Caco-2 (cell line): ENCODE measurements at regions of chr12 and their contacts with region 1.

Region 1: DNA sequence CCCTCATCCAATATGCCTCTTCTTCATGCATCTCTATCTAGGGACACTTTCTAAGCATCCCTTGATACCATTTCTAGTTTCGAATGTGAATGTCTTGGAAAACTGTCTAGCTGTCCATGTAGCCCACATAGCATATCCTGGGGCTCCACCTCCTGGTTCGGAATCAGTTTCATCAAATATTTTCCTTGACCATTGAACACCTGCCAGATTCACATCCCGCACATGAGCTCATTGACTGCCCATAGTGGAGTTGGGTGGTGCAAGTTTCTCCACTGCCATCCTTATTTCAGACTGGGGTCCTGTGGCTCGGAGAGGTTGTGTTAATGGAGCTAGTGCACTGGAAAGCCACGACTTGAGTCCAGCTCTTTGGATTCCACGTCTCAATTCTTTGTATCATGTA is 58.6 kb upstream of the TMEM263 start:
- DNase-seq: peak in 1 of 2 experiments; percentile 31
- H3K4me3 ChIP-seq: no peak overlapping the region
- H3K4me3 Mint-ChIP-seq: no peak overlapping the region
- H3K27ac Mint-ChIP-seq: no peak overlapping the region
- H3K4me1 ChIP-seq: peaks cover 12% of the 10 kb centered on the region
- H3K4me1 Mint-ChIP-seq: peaks cover 10% of the 10 kb centered on the region
- H3K27me3 ChIP-seq: no peaks in the 10 kb centered on the region
- H3K27me3 Mint-ChIP-seq: no peaks in the 10 kb centered on the region
- CTCF ChIP-seq: peak in 1 of 2 experiments; percentile 37

Region 2: GRCh38 chr12:106386813-106387535 is 510.1 kb before region 1 on chr12:
- CTCF ChIA-PET with region 1: no interaction called
- POLR2A ChIA-PET with region 1: no interaction called
- intact Hi-C with region 1: loop called (anchors 1 kb)
- DNase-seq: no peak
- H3K4me3 ChIP-seq: no peak overlapping the region
- H3K4me3 Mint-ChIP-seq: no peak overlapping the region
- H3K27ac Mint-ChIP-seq: no peak overlapping the region
- H3K4me1 ChIP-seq: no peaks in the 10 kb centered on the region
- H3K4me1 Mint-ChIP-seq: peaks cover 8% of the 10 kb centered on the region
- H3K27me3 ChIP-seq: no peaks in the 10 kb centered on the region
- H3K27me3 Mint-ChIP-seq: no peaks in the 10 kb centered on the region
- CTCF ChIP-seq: no peak

Region 3: DNA sequence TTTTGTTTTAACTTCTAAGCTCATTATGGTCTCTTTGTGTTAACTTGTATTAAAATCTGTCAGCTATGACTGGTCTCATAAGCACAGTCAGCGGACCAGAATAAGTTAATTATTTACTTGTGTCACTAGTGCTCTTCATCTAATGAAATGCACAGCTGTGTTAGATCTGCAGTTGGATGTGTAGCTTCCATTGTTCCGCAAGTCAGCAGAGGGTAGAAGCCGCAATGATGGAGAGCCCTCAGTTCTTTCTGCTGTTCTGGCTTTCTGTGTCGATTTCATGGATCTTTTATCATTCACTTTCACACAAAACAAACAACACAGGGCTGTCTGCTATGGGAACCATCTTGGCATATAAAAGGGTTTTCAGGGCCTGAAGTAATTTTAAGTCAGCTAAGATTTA is 403.6 kb before region 1 on chr12:
- CTCF ChIA-PET with region 1: no interaction called
- POLR2A ChIA-PET with region 1: no interaction called
- intact Hi-C with region 1: no loop called
- DNase-seq: peak in 1 of 2 experiments; percentile 6
- H3K4me3 ChIP-seq: no peak overlapping the region
- H3K4me3 Mint-ChIP-seq: no peak overlapping the region
- H3K27ac Mint-ChIP-seq: no peak overlapping the region
- H3K4me1 ChIP-seq: no peaks in the 10 kb centered on the region
- H3K4me1 Mint-ChIP-seq: peaks cover 7% of the 10 kb centered on the region
- H3K27me3 ChIP-seq: no peaks in the 10 kb centered on the region
- H3K27me3 Mint-ChIP-seq: no peaks in the 10 kb centered on the region
- CTCF ChIP-seq: no peak